IMR-90 (cell line): ENCODE measurements at regions of chr4 and their contacts with region 1.

Region 1: DNA sequence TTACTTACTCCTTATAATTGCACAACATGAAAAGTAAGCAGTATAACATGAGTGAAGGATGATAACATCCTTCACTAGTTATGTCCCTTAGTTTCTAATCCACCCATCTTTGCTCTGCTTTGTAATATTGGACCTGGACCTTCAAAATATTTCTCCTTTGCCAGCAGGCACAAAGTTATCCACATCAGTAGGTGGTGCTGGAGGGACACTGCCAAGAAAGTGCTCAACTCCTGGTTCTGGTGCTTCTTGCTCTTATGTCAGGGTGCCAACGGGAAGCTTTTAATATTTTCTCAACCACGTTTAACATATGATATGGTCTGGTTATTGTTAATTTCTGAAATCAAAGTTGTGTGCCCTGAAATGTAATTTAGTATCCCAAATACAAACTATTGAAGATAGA is 49.1 kb downstream of the TMEM165 start:
- DNase-seq: peak; percentile 51
- ATAC-seq: 0 out of 2 replicates have a peak, but pooled peaks have one; percentile 25
- H3K4me3 ChIP-seq: no peak overlapping the region
- H3K27ac ChIP-seq: no peak overlapping the region
- H3K4me1 ChIP-seq: peaks cover 9% of the 10 kb centered on the region
- H3K27me3 ChIP-seq: no peaks in the 10 kb centered on the region
- CTCF ChIP-seq: peak; percentile 55
- POLR2A ChIP-seq: no peak
- RAD21 ChIP-seq: peak; percentile 64

Region 2: DNA sequence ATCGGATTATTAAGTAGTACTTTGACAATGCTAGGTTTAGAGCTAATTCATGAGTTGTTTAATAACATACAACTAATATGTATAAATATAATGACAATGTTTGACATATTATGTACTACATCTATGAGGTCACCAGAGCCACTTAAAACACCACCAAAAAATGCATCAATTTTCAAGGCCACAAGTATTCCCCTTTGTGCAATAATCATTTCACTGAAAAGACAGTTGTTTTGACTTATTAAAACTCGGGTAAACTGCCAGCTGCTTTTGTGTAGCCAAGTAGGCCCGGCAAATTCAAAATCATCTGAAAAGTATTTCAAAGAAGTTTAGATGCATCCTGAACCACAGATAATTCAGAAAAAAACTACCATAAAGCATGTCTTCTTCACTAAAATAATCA is 53.2 kb after region 1 on chr4:
- CTCF ChIA-PET with region 1: no interaction called
- POLR2A ChIA-PET with region 1: no interaction called
- dilution Hi-C with region 1: no loop called
- in situ Hi-C with region 1: no loop called
- intact Hi-C with region 1: loop called (anchors 5 kb)
- DNase-seq: peak; percentile 34
- ATAC-seq: peak; percentile 29; the same call in 1 of the 2 replicates
- H3K4me3 ChIP-seq: no peak overlapping the region
- H3K27ac ChIP-seq: no peak overlapping the region
- H3K4me1 ChIP-seq: peaks cover 5% of the 10 kb centered on the region
- H3K27me3 ChIP-seq: no peaks in the 10 kb centered on the region
- CTCF ChIP-seq: no peak
- POLR2A ChIP-seq: no peak
- RAD21 ChIP-seq: no peak

Region 3: DNA sequence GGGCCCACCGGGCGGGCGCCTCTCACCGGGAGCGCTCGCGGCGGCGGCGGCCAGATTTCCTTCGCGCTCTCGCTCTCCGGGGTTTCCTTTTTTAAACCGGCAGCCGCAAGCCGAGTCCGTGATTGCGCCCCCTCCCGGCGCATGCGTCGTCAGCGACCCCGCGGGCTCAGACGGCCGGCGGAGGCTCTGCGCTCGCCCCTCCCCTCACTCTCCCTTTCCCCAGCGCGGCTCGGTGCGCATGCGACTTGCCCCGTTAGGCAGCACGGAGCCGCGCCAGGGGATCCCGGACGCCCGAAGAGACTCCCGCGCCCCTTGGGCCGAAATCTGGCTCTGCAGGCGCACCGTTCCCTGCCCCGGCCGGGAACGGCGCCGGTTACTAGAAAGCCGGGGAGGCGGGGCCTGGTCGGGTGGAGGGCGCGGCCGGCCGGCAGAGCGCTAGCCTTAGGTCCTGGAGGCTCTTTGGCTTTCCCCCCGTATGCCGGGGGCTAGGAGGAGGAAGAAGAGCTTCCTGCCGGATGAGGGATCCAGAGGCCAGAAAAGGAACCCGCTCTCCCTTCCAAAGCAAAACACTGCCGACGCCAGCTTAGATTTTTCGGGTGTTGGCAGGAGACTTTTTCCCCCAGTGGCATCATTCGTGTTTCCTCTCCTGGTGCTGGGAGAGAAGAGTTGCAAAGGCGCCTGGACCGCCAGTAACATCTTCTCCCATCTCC is 102.1 kb after region 1 on chr4 and contains the start of gene CLOCK:
- CTCF ChIA-PET with region 1: no interaction called
- POLR2A ChIA-PET with region 1: interaction called, 3 read pairs
- dilution Hi-C with region 1: no loop called
- in situ Hi-C with region 1: loop called (anchors 5 kb)
- intact Hi-C with region 1: loop called (anchors 2 kb)
- DNase-seq: peak; percentile 85
- ATAC-seq: peak; percentile 82
- H3K4me3 ChIP-seq: peak within 1 kb of the TSS; percentile 62
- H3K27ac ChIP-seq: peak within 1 kb of the TSS; percentile 75
- H3K4me1 ChIP-seq: peaks cover 5% of the 10 kb centered on the region; the same call in 1 of the 2 replicates
- H3K27me3 ChIP-seq: no peaks in the 10 kb centered on the region
- CTCF ChIP-seq: peak; percentile 44
- POLR2A ChIP-seq: peak; percentile 54
- RAD21 ChIP-seq: no peak; the same call in 1 of the 2 replicates
- total RNA-seq, gene CLOCK: 51.4 and 53.4 TPM in 2 replicates

Region 4: GRCh38 chr4:55554453-55555030 is 109.7 kb after region 1 on chr4:
- CTCF ChIA-PET with region 1: interaction called, 3 read pairs
- POLR2A ChIA-PET with region 1: no interaction called
- dilution Hi-C with region 1: no loop called
- in situ Hi-C with region 1: loop called (anchors 5 kb)
- intact Hi-C with region 1: loop called (anchors 2 kb)
- DNase-seq: peak; percentile 71
- ATAC-seq: peak; percentile 67
- H3K4me3 ChIP-seq: no peak overlapping the region
- H3K27ac ChIP-seq: no peak overlapping the region
- H3K4me1 ChIP-seq: 0 out of 2 replicates have a peak, but pooled peaks cover 2% of the 10 kb centered on the region
- H3K27me3 ChIP-seq: peaks cover 2% of the 10 kb centered on the region; the same call in 1 of the 2 replicates
- CTCF ChIP-seq: peak; percentile 72
- POLR2A ChIP-seq: no peak
- RAD21 ChIP-seq: peak; percentile 72

Region 5: GRCh38 chr4:55736605-55737183 is 291.9 kb after region 1 on chr4:
- CTCF ChIA-PET with region 1: no interaction called
- POLR2A ChIA-PET with region 1: no interaction called
- dilution Hi-C with region 1: no loop called
- in situ Hi-C with region 1: no loop called
- intact Hi-C with region 1: loop called (anchors 10 kb)
- DNase-seq: peak; percentile 3
- ATAC-seq: no peak
- H3K4me3 ChIP-seq: no peak overlapping the region
- H3K27ac ChIP-seq: no peak overlapping the region
- H3K4me1 ChIP-seq: no peaks in the 10 kb centered on the region
- H3K27me3 ChIP-seq: peaks cover 7% of the 10 kb centered on the region
- CTCF ChIP-seq: peak; percentile 42
- POLR2A ChIP-seq: no peak
- RAD21 ChIP-seq: peak; percentile 34; the same call in 1 of the 2 replicates

Region 6: GRCh38 chr4:55866973-55867574 is 422.2 kb after region 1 on chr4:
- CTCF ChIA-PET with region 1: interaction called, 3 read pairs
- POLR2A ChIA-PET with region 1: no interaction called
- dilution Hi-C with region 1: no loop called
- in situ Hi-C with region 1: no loop called
- intact Hi-C with region 1: loop called (anchors 5 kb)
- DNase-seq: peak; percentile 74
- ATAC-seq: peak; percentile 75
- H3K4me3 ChIP-seq: no peak overlapping the region
- H3K27ac ChIP-seq: no peak overlapping the region
- H3K4me1 ChIP-seq: peaks cover 2% of the 10 kb centered on the region; the same call in 1 of the 2 replicates
- H3K27me3 ChIP-seq: no peaks in the 10 kb centered on the region
- CTCF ChIP-seq: peak; percentile 79
- POLR2A ChIP-seq: no peak
- RAD21 ChIP-seq: peak; percentile 62